ENCODE measurements at regions of chr5 and their contacts with region 1.

Region 1: DNA sequence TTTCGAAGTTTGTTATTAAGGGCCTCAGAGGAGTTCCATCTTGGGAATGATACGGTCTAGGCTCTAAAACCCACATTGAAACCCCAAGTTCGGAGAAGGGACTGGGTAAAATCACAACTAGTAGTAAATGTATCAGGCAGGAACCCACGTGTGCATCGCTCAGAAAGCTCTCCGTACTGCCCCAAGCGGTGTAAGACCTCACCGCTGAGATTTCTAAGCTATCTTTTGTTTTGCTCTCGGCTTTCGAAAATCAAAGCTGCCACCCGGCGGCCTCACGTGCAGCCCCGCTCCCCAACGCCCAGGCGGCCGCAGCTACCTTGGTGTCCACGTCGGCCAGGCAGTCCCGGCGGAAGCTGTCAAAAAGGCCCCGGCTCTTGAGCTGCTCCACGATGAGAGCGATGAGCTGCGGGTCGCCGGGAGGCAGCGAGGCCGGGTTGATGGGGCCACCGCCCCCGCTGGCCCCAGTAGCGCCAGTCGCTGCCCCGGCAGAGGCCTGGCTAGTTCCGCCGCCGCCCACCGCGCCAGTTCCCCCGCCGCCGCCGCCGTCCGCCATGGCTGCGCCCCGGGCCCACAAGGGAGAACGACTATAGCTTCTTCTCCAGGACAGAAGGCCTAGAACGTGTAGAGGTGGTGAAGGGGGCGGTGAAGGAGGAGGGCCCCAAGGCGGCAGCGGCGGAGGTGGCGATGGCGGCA is 420 bp downstream of the BOD1 start:
- H3K4me3 ChIP-seq: peak overlapping the region; percentile 87
- H3K27ac ChIP-seq: peak overlapping the region; percentile 87
- H3K4me1 ChIP-seq: peaks cover 9% of the 10 kb centered on the region
- CTCF ChIP-seq: peak; percentile 81

Region 2: DNA sequence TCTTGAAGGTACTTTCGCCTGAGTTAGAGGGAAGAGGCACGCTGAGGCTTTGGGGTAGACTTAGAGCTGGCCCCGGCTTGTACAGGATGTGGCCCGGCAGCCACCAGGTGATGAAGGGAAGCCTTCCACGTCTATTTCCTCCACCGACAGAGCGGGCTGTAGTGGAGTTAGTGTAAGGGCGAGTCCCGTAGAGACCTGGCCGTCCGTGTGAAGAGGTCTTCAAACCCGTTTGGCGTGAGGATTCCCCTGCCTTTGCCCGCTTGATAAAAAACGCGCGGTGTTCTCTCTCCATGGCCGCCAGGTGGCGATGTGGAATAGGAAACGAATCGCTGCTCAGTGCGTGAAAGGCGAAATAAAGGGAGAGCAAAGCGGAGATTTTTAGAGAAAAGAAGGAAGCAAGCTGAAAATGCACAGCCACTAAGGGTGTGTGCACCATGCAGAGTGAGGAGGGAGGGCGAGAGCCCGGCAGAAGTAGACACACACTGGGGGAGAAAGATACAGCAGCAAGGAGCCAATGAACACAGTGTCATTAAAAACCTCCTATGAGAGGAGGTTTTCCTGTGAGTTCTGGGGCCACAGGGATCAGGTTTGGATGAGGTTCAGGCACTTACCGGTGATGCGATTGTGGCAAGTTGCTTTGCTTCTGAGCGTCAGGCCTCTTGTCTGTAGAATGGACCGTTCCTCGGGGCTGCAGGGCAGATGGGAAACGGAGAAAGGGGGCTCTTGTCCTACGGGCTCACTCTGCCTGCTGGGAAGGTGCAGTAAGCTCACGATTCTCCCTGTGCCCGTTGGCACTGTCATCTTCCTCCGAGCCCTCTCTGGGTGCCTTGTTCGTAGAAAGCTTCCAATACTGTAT is 322.0 kb before region 1 on chr5:
- CTCF ChIA-PET with region 1: interaction called, 11 read pairs
- POLR2A ChIA-PET with region 1: no interaction called
- H3K4me3 ChIP-seq: no peak overlapping the region
- H3K27ac ChIP-seq: no peak overlapping the region
- H3K4me1 ChIP-seq: peaks cover 4% of the 10 kb centered on the region; the same call in 1 of the 2 replicates
- CTCF ChIP-seq: peak; percentile 94

Region 3: GRCh38 chr5:173972925-173973615 is 357.0 kb after region 1 on chr5:
- CTCF ChIA-PET with region 1: interaction called, 94 read pairs
- POLR2A ChIA-PET with region 1: interaction called, 3 read pairs
- H3K4me3 ChIP-seq: peak overlapping the region; percentile 44
- H3K27ac ChIP-seq: no peak overlapping the region; the same call in 1 of the 2 replicates
- H3K4me1 ChIP-seq: no peaks in the 10 kb centered on the region
- CTCF ChIP-seq: peak; percentile 81

Region 4: GRCh38 chr5:174311531-174312269 is 695.7 kb after region 1 on chr5:
- CTCF ChIA-PET with region 1: interaction called, 18 read pairs
- POLR2A ChIA-PET with region 1: interaction called, 3 read pairs
- H3K4me3 ChIP-seq: peak overlapping the region; percentile 39
- H3K27ac ChIP-seq: no peak overlapping the region
- H3K4me1 ChIP-seq: no peaks in the 10 kb centered on the region
- CTCF ChIP-seq: peak; percentile 84

Measured in HEK293 (cell line).